ENCODE measurements at regions of chr10 and their contacts with region 1.

Region 1: DNA sequence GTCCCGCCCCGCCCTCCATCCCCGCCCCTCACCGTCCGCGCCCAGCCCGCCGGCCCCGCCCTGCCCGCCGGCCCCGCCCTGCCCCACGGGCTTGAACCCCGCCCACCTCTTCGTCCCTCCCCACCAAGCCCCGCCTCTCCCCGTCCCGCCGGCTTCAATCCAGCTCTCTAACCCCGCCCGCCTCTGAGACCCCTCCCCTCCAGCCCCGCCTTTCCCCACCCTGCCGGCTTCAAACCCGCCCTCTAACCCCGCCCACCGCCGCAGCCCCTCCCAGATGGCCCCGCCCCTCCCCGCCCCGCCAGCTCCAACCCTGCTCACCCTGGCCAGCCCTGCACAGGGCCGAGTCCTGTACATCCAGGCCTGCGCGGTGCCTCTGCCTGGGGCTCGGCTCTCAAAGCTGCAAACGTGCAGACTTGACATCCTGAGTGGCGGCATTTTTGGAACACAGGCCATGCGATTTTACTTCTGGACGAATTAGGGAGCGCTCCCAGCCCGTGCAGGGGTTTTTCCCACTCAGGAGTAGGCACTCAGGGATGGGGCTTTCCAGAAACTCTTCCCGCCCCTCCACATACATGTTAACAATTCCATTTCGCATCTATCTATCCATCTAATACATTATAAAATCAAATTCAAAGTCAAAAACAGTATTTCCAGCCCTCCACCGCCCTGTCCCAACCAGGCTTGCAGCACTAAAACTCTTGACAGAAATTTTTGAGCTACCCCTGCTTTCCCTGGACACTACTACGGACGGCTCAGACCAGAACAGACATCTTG is 475 bp upstream of the NMT2 start:
- H3K4me3 Mint-ChIP-seq: peak overlapping the region; percentile 1
- H3K27ac Mint-ChIP-seq: peak overlapping the region; percentile 82
- H3K4me1 Mint-ChIP-seq: peaks cover 19% of the 10 kb centered on the region
- H3K27me3 Mint-ChIP-seq: peaks cover 48% of the 10 kb centered on the region

Region 2: GRCh38 chr10:14674376-14675050 is 494.5 kb before region 1 on chr10:
- intact Hi-C with region 1: no loop called
- H3K4me3 Mint-ChIP-seq: no peak overlapping the region
- H3K27ac Mint-ChIP-seq: no peak overlapping the region
- H3K4me1 Mint-ChIP-seq: peaks cover 27% of the 10 kb centered on the region
- H3K27me3 Mint-ChIP-seq: peaks cover 18% of the 10 kb centered on the region

Region 3: DNA sequence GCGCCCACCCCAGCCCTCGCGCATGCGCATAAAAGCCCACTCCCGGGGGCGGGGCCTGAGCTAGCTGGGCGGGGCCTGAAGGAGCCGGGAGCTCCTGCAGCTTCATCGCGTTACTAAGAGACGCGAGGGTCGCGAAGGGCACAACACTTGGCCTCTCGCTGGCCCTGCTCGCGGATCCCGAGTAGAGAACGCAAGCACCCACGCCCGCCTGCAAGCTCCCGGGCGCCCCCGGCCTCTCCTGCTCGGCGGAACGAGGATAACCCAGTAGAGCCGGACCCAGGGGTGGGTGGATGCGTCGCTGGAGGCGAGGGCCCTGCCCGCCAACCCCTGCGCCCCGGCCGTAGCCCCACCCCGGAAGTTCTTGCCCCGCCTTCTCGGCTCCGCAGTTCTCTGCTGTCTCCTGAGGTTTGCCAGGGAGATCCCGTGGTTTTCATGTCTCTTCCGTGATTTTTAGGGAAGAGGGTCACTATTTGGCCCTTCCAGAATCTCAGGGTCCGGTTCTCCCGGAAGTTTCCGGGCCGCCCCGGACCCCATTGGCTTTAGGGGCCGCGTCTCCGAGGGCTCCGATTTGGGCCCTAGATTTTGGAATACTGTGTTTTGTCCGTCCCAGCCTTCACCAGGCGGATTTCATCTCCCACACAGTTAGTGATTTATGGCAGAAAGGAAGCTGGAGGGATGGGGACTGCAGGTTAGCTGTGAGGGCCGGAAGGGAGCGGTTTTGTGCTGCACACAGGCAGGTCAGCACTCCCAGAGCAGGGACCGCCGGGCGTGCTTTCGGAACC is 209.5 kb before region 1 on chr10 and contains the start of gene MEIG1:
- intact Hi-C with region 1: loop called (anchors 10 kb)
- H3K4me3 Mint-ChIP-seq: peak within 1 kb of the TSS; percentile 89
- H3K27ac Mint-ChIP-seq: peak within 1 kb of the TSS; percentile 99
- H3K4me1 Mint-ChIP-seq: peaks cover 20% of the 10 kb centered on the region
- H3K27me3 Mint-ChIP-seq: no peaks in the 10 kb centered on the region

Region 4: GRCh38 chr10:15141136-15142054 is 27.6 kb before region 1 on chr10:
- intact Hi-C with region 1: no loop called
- H3K4me3 Mint-ChIP-seq: no peak overlapping the region
- H3K27ac Mint-ChIP-seq: no peak overlapping the region
- H3K4me1 Mint-ChIP-seq: no peaks in the 10 kb centered on the region
- H3K27me3 Mint-ChIP-seq: no peaks in the 10 kb centered on the region